Adrenal gland (tissue), 19 donors: ENCODE measurements at regions of chr11 and their contacts with region 1.

Region 1: GRCh38 chr11:63738720-63739360 is 29.7 kb downstream of the ZFTA start:
- DNase-seq: peak; percentile 61 to 92 (median 79)
- H3K4me3 ChIP-seq: no peak overlapping the region
- H3K27ac ChIP-seq: no peak overlapping the region
- H3K4me1 ChIP-seq: peaks cover 0 to 5% of the 10 kb centered on the region in 2 donors
- H3K27me3 ChIP-seq: no peaks in the 10 kb centered on the region
- CTCF ChIP-seq: peak; percentile 80 to 99 (median 90)
- POLR2A ChIP-seq: no peak

Region 2: GRCh38 chr11:63478896-63479295 is 259.9 kb before region 1 on chr11:
- intact Hi-C with region 1: loop called in 1 of 2 experiments (anchors 5 kb)
- DNase-seq: peak; percentile 50 to 74 (median 57)
- H3K4me3 ChIP-seq: no peak overlapping the region
- H3K27ac ChIP-seq: no peak overlapping the region
- H3K4me1 ChIP-seq: no peaks in the 10 kb centered on the region
- H3K27me3 ChIP-seq: no peaks in the 10 kb centered on the region
- CTCF ChIP-seq: peak; percentile 86 to 96 (median 92)
- POLR2A ChIP-seq: no peak

Region 3: DNA sequence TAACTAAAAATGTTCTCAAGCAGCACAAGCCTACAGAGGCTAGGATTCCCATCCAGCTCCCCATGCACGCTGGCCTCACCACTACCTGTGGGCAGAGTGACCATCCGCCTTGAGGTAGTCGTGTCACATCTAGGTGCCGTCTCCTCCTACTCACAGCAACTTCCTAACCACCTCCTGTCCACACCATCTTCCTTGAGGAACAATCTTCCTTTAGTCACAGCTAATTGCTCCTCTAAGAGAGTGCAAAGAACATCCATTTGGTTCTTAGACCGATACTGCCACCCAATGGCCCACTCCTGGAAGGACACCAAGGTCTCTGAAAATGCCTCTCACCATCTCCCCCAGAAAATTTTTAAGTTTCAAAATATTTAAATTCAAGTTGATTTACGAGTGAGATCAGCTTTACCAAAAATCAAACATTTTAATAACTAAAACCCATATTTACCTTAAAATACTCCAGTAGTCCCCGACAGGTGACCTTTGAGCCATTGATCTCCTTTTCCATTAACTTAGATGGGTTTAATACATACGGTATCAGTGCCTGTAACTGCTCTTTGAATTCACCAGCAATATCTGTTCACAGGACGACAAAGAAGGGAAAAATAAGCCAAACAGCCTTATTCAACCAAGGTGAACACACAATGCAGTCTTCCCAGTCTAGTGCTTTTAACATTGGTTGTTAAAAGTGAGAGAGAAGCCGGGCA is 102.9 kb before region 1 on chr11:
- intact Hi-C with region 1: loop called (anchors 5 to 10 kb)
- DNase-seq: peak; percentile 49 to 83 (median 58)
- H3K4me3 ChIP-seq: no peak overlapping the region
- H3K27ac ChIP-seq: no peak overlapping the region
- H3K4me1 ChIP-seq: no peaks in the 10 kb centered on the region
- H3K27me3 ChIP-seq: no peaks in the 10 kb centered on the region
- CTCF ChIP-seq: peak; percentile 36 to 90 (median 80)
- POLR2A ChIP-seq: no peak

Region 4: DNA sequence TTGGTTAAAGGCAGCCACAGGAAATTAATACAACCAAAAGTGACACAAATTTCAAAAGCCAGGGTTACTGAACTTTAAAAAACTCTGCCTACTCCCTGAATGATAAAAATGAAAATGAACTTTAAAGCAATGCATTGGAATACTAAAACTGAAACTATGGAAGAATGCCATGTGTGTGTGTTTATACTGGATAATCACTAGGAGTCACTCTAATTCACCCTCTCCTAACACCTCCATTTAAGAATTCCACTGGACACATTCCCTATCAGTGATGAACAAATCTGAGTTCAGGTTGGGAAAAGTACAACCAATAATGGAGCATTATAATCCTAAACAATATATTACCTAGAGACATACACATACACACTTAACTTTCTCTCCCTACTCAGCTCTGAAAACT is 97.1 kb before region 1 on chr11:
- intact Hi-C with region 1: loop called (anchors 5 to 10 kb)
- DNase-seq: no peak
- H3K4me3 ChIP-seq: no peak overlapping the region
- H3K27ac ChIP-seq: no peak overlapping the region
- H3K4me1 ChIP-seq: no peaks in the 10 kb centered on the region
- H3K27me3 ChIP-seq: no peaks in the 10 kb centered on the region
- CTCF ChIP-seq: no peak
- POLR2A ChIP-seq: no peak

Region 5: GRCh38 chr11:63663809-63664208 is 75.0 kb before region 1 on chr11:
- intact Hi-C with region 1: no loop called
- DNase-seq: no peak
- H3K4me3 ChIP-seq: no peak overlapping the region
- H3K27ac ChIP-seq: no peak overlapping the region
- H3K4me1 ChIP-seq: peaks cover 9 to 38% of the 10 kb centered on the region in 2 donors
- H3K27me3 ChIP-seq: no peaks in the 10 kb centered on the region
- CTCF ChIP-seq: no peak
- POLR2A ChIP-seq: no peak

Region 6: GRCh38 chr11:63681321-63682049 is 57.4 kb before region 1 on chr11 and contains the start of gene RTN3:
- intact Hi-C with region 1: loop called in 1 of 2 experiments (anchors 10 kb)
- DNase-seq: peak; percentile 97 to 98 (median 97)
- H3K4me3 ChIP-seq: peak within 1 kb of the TSS; percentile 70 to 97 (median 84)
- H3K27ac ChIP-seq: peak within 1 kb of the TSS; percentile 92 to 95 (median 94)
- H3K4me1 ChIP-seq: peaks cover 18 to 33% of the 10 kb centered on the region in 2 donors
- H3K27me3 ChIP-seq: no peaks in the 10 kb centered on the region
- CTCF ChIP-seq: peak in 2 of 6 experiments; percentile 12 to 31
- POLR2A ChIP-seq: peak; percentile 93 to 99
- total RNA-seq, gene RTN3: 44.8 to 174 (median 95.6) TPM

Region 7: DNA sequence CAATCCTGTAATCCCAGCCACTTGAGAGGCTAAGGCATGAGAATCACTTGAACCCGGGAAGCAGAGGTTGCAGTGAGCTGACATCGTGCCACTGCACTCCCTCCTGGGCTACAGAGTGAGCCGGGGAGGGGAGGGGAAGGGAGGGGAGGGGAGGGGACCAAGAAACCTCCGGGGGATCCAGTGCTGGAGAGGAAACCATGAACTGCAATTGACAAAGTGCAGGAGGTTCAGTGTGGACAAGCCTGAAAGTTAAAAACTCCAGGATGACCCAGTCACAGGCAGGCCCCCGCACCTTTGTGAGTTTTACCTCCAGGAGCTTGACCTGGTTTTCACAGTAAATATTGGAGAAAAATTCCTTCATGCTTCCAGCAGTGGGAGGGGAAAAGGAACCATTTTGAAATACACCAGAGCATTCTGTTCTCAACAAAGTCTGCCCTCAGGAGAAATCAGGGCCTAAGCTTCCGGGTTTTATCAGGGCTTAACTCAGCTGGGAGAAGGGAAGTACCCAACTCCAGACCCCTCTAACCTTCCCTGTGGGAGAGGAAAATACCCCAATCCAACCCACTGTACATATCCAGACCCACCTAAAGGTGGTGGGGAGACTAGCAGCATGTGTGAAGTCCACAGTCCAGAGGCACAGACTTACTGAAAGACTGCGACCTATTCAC is 45.2 kb after region 1 on chr11:
- intact Hi-C with region 1: no loop called
- DNase-seq: no peak
- H3K4me3 ChIP-seq: no peak overlapping the region
- H3K27ac ChIP-seq: no peak overlapping the region
- H3K4me1 ChIP-seq: no peaks in the 10 kb centered on the region
- H3K27me3 ChIP-seq: no peaks in the 10 kb centered on the region
- CTCF ChIP-seq: no peak
- POLR2A ChIP-seq: no peak

Region 8: DNA sequence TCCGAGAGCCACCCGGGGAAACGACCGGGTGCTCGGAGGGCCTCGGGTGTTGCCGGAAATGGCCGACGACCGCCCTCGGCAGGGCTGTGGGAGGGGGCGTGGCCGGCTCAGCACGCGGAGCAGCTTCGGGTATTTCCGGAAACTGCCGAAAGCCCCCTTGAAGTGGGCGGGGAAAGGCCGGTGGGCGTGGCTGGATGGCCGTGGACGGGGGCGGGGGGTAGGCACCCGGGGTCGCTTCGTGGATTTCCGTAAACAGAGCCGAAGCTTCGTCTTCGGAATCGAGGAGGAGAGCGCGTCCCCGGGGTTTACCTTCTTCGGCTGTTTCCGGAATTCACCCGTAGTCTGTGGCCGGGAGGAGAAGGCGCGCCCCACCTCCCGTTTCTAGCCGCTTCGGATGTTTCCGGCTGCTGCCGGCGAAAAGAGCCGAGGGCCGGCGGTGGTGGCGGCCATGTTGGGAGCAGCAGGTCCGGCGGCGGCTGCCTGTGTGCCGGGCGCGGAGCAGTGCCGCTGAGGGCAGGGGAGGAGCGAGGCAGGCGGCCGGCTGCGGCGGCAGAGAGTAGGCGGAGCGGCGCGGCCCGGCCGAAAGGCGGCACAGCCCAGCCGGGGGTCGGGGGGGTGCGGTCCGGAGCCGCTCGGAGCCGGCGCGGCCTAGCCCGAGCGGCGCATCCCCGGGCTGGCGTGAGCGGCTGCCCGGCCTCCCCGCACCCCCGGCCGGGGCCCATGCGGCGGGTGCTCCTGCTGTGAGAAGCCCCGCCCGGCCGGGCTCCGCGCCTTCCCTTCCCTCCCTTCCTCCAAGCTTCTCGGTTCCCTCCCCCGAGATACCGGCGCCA is 100.1 kb after region 1 on chr11 and contains the start of gene MARK2:
- intact Hi-C with region 1: no loop called
- DNase-seq: peak; percentile 98 to 100 (median 99)
- H3K4me3 ChIP-seq: peak within 1 kb of the TSS; percentile 45 to 98 (median 63)
- H3K27ac ChIP-seq: peak within 1 kb of the TSS; percentile 59 to 93 (median 75)
- H3K4me1 ChIP-seq: peaks cover 40 to 50% of the 10 kb centered on the region in 2 donors
- H3K27me3 ChIP-seq: no peaks in the 10 kb centered on the region
- CTCF ChIP-seq: peak in 1 of 6 experiments; percentile 12
- POLR2A ChIP-seq: peak; percentile 49 to 58
- total RNA-seq, gene MARK2: 9.7 to 39.7 (median 35.8) TPM

Region 9: GRCh38 chr11:63901660-63902059 is 162.8 kb after region 1 on chr11:
- intact Hi-C with region 1: no loop called
- DNase-seq: no peak
- H3K4me3 ChIP-seq: no peak overlapping the region
- H3K27ac ChIP-seq: no peak overlapping the region
- H3K4me1 ChIP-seq: no peaks in the 10 kb centered on the region
- H3K27me3 ChIP-seq: no peaks in the 10 kb centered on the region
- CTCF ChIP-seq: peak in 1 of 6 experiments; percentile 13
- POLR2A ChIP-seq: no peak